ENCODE measurements at regions of chrX and their contacts with region 1.

Region 1: DNA sequence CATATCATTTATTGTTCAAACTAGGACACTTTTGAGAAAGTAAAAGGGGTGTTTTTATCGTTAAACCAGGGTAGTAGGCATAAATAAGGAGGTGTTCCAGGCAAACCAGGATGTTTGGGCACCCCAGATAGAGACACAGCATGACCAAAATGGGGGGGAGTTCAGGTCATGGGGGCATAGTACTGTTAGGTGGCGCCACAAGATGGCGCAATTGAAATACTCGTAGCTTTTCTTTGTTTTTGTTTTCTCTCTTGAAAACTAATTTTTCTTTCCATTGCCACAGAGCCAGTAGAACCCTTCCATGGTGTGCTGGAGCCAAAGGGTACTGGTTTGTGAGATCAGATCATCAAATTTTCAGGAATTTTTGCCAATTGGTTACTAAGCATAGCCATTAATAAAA is 283.4 kb downstream of the BCOR start:
- DNase-seq: no peak
- ATAC-seq: peak in 2 of 4 donors; percentile 22 to 46
- H3K4me3 ChIP-seq: no peak overlapping the region
- H3K27ac ChIP-seq: peak overlapping the region in 9 of 12 donors; percentile 9 to 73 (median 48)
- H3K4me1 ChIP-seq: peaks cover 0 to 19% (median 2%) of the 10 kb centered on the region in 12 donors
- H3K27me3 ChIP-seq: peaks cover 0 to 45% (median 0%) of the 10 kb centered on the region in 9 donors
- CTCF ChIP-seq: peak; percentile 25 to 56 (median 45)
- POLR2A ChIP-seq: no peak

Region 2: GRCh38 chrX:39730662-39731397 is 83.6 kb before region 1 on chrX:
- intact Hi-C with region 1: loop called in 5 of 10 experiments (anchors 5 to 10 kb)
- DNase-seq: peak; percentile 64 to 78 (median 77)
- ATAC-seq: peak; percentile 69 to 90 (median 82)
- H3K4me3 ChIP-seq: no peak overlapping the region
- H3K27ac ChIP-seq: peak overlapping the region in 5 of 12 donors; percentile 34 to 48 (median 38)
- H3K4me1 ChIP-seq: peaks cover 0 to 29% (median 10%) of the 10 kb centered on the region in 12 donors
- H3K27me3 ChIP-seq: peaks cover 0 to 35% (median 0%) of the 10 kb centered on the region in 9 donors
- CTCF ChIP-seq: peak; percentile 36 to 71 (median 58)
- POLR2A ChIP-seq: no peak

Region 3: GRCh38 chrX:39907964-39908616 is 93.7 kb after region 1 on chrX:
- intact Hi-C with region 1: loop called in 1 of 10 experiments (anchors 10 kb)
- DNase-seq: peak; percentile 44 to 76 (median 72)
- ATAC-seq: peak; percentile 80 to 93 (median 88)
- H3K4me3 ChIP-seq: no peak overlapping the region
- H3K27ac ChIP-seq: peak overlapping the region in 9 of 12 donors; percentile 27 to 66 (median 38)
- H3K4me1 ChIP-seq: peaks cover 0 to 29% (median 5%) of the 10 kb centered on the region in 12 donors
- H3K27me3 ChIP-seq: peaks cover 0 to 23% (median 0%) of the 10 kb centered on the region in 9 donors
- CTCF ChIP-seq: no peak
- POLR2A ChIP-seq: no peak

Region 4: DNA sequence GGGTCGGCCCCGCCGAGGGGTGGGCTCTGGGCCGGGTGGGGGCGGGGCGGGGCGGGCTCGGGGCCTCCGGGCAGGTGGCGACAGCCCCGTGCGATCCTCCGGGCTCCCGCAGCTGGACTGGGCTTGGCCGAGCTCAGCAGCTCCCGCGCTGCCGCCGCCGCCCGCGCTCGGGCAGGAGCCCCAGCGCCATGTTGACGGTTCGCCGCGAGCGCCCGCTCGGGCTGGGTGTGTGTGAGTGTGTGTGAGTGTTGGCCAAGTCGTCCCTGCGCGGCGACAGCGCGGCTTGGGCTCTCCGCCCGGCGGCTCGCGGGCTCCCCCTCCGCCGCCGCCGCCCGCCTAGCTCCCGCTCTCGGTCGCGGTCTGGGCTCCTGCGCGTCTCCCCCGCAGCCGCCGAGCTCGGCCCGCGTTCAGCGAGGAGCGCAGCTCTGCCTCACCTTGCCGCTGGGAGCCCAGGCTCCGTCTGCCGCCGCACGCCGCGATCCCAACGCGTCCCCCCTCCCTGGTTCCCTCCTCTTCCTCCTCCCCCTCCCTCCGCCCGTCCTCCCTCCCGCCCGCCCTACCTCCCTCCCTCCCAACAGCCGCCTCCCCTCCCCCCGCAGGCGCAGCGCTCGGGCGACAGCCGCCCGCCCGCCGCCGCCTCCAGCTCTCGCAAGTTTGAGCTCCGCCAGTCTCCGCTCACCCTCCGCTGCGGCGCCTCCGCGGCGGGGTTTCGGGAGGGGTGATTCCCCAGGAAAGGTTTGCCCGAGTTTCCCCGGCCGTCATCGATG is 283.3 kb after region 1 on chrX and contains the start of gene BCOR:
- intact Hi-C with region 1: loop called in 7 of 10 experiments (anchors 5 to 10 kb)
- DNase-seq: peak; percentile 77 to 86 (median 82)
- ATAC-seq: peak in 3 of 4 donors; percentile 28 to 66 (median 59)
- H3K4me3 ChIP-seq: peak within 1 kb of the TSS; percentile 63 to 98 (median 78)
- H3K27ac ChIP-seq: peak within 1 kb of the TSS; percentile 84 to 97 (median 90)
- H3K4me1 ChIP-seq: peaks cover 0 to 63% (median 9%) of the 10 kb centered on the region in 12 donors
- H3K27me3 ChIP-seq: peaks cover 0 to 92% (median 0%) of the 10 kb centered on the region in 9 donors
- CTCF ChIP-seq: no peak
- POLR2A ChIP-seq: peak in 1 of 2 donors; percentile 83
- total RNA-seq, gene BCOR: 11.3 to 40.1 (median 19.5) TPM

Region 5: GRCh38 chrX:40169193-40170101 is 355.1 kb after region 1 on chrX:
- intact Hi-C with region 1: loop called in 3 of 10 experiments (anchors 5 to 10 kb)
- DNase-seq: peak in 4 of 5 donors; percentile 34 to 75 (median 46)
- ATAC-seq: no peak
- H3K4me3 ChIP-seq: peak overlapping the region in 2 of 12 donors; percentile 19 to 43
- H3K27ac ChIP-seq: peak overlapping the region in 2 of 12 donors; percentile 74 to 76
- H3K4me1 ChIP-seq: peaks cover 0 to 56% (median 19%) of the 10 kb centered on the region in 12 donors
- H3K27me3 ChIP-seq: peaks cover 0 to 81% (median 0%) of the 10 kb centered on the region in 9 donors
- CTCF ChIP-seq: peak in 8 of 12 donors; percentile 15 to 35 (median 23)
- POLR2A ChIP-seq: no peak

Region 6: GRCh38 chrX:40266490-40267333 is 452.3 kb after region 1 on chrX:
- intact Hi-C with region 1: loop called in 8 of 10 experiments (anchors 2 to 10 kb)
- DNase-seq: peak; percentile 67 to 84 (median 70)
- ATAC-seq: peak; percentile 84 to 92 (median 90)
- H3K4me3 ChIP-seq: peak overlapping the region; percentile 4 to 63 (median 50)
- H3K27ac ChIP-seq: peak overlapping the region in 11 of 12 donors; percentile 21 to 84 (median 60)
- H3K4me1 ChIP-seq: peaks cover 0 to 31% (median 13%) of the 10 kb centered on the region in 12 donors
- H3K27me3 ChIP-seq: peaks cover 0 to 11% (median 0%) of the 10 kb centered on the region in 9 donors
- CTCF ChIP-seq: peak; percentile 47 to 76 (median 61)
- POLR2A ChIP-seq: no peak

Measured in heart left ventricle (tissue), 16 donors.